ENCODE measurements at regions of chr3 and their contacts with region 1.

Region 1: DNA sequence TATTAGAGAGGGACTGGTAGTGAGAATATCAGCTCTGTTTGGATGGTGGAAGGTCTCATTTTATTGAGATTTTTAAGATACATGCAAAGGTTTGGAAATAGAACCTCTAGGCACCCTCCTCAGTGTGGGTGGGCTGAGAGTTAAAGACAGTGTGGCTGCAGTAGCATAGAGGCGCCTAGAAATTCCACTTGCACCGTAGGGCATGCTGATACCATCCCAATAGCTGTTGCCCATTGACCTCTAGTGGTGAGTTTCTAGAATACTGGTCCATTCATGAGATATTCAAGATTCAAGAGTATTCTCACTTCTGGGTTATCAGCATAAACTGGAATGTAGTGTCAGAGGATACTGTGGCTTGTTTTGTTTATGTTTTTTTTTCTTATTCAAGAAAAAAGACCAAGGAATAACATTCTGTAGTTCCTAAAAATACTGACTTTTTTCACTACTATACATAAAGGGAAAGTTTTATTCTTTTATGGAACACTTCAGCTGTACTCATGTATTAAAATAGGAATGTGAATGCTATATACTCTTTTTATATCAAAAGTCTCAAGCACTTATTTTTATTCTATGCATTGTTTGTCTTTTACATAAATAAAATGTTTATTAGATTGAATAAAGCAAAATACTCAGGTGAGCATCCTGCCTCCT is 87.2 kb downstream of the TGFBR2 start:
- DNase-seq: peak; percentile 44
- H3K4me3 Mint-ChIP-seq: no peak overlapping the region
- H3K27ac Mint-ChIP-seq: peak overlapping the region; percentile 35
- H3K4me1 Mint-ChIP-seq: peaks cover 43% of the 10 kb centered on the region
- H3K27me3 Mint-ChIP-seq: no peaks in the 10 kb centered on the region

Region 2: DNA sequence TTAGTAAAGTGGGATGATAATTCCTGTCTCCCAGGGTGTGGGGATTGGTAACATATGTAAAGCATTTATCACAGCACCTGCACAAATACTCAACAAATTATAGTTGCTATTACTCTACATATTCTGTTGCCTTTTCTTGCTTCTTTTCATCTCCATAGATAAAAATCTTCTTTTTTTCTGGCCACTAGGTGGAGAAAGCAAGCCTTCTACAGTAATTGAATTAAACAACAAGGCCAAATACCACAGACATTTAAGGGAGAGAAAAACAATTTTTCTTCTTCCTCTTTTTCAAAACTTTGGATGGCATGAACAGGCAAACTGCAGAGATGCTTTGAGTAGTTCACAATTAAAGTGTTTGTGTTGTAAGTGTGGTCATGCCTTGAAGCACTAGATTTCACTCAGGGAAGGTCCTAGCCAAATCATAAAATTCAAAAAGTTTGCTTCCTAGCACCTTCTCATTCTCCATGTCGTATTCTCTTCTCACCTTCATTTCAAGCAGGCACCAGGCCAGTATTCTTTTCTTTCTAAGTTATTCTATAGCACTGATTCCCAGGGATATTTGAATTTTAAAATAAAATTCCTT is 580.6 kb before region 1 on chr3:
- CTCF ChIA-PET with region 1: interaction called, 8 read pairs
- POLR2A ChIA-PET with region 1: no interaction called
- intact Hi-C with region 1: loop called (anchors 2 kb)
- DNase-seq: no peak
- H3K4me3 Mint-ChIP-seq: no peak overlapping the region
- H3K27ac Mint-ChIP-seq: no peak overlapping the region
- H3K4me1 Mint-ChIP-seq: peaks cover 3% of the 10 kb centered on the region
- H3K27me3 Mint-ChIP-seq: no peaks in the 10 kb centered on the region

Region 3: DNA sequence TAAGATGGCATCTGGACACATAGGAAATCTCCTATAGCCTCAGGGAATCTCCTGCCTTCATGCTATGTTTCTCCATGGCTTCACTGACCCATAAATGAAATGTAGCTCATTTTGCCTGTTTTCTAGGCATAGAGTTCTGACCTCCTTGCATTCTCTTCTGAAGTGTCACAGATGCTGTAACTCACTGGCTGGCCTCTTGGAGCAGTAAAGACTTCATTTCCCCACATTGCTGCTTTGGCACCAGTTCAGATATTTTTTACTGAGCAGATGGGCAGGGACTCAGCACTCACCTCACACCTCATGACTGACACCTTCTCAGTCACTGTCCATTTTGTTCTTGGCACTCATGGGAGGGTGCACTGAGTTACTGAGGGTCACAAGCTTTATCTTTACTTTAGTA is 373.9 kb before region 1 on chr3:
- CTCF ChIA-PET with region 1: interaction called, 27 read pairs
- POLR2A ChIA-PET with region 1: no interaction called
- intact Hi-C with region 1: loop called (anchors 5 kb)
- DNase-seq: peak; percentile 44
- H3K4me3 Mint-ChIP-seq: no peak overlapping the region
- H3K27ac Mint-ChIP-seq: no peak overlapping the region
- H3K4me1 Mint-ChIP-seq: peaks cover 4% of the 10 kb centered on the region
- H3K27me3 Mint-ChIP-seq: no peaks in the 10 kb centered on the region

Region 4: DNA sequence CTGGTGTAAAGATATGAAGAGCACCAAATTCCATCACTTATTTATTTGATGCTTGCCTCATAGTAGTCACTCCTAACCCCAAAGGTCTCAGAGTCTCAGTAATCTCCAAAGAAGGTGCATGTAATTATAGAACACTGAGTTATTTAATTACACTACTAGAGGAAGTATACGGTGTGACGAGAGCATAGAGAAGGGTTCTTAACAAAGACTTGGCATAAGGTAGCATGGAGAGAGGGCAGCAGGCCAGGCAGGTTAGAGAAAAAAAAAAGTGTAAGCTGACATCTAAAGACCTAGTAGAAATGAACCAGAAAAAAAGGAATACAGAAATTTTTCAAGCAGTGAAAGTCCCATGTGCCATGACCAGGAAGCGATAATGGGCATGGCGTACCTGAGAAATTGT is 300.5 kb before region 1 on chr3:
- CTCF ChIA-PET with region 1: no interaction called
- POLR2A ChIA-PET with region 1: no interaction called
- intact Hi-C with region 1: no loop called
- DNase-seq: no peak
- H3K4me3 Mint-ChIP-seq: no peak overlapping the region
- H3K27ac Mint-ChIP-seq: no peak overlapping the region
- H3K4me1 Mint-ChIP-seq: no peaks in the 10 kb centered on the region
- H3K27me3 Mint-ChIP-seq: no peaks in the 10 kb centered on the region

Region 5: DNA sequence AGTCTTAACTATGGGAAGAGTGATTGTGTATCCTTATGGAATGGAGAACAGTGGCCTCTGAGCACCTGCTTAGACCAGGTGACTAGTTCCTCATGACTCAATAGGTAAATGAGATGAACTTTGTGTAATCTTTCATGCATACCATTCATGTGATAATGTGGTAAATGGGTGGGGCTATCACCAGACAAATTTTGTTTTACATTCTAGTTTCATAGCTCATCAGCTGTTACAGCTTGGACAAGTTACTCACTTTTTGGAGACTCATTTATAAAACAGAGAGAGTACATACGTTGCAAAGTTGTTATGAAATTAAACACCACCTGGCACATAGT is 190.9 kb before region 1 on chr3:
- CTCF ChIA-PET with region 1: interaction called, 11 read pairs
- POLR2A ChIA-PET with region 1: no interaction called
- intact Hi-C with region 1: no loop called
- DNase-seq: no peak
- H3K4me3 Mint-ChIP-seq: no peak overlapping the region
- H3K27ac Mint-ChIP-seq: peak overlapping the region; percentile 70
- H3K4me1 Mint-ChIP-seq: peaks cover 46% of the 10 kb centered on the region
- H3K27me3 Mint-ChIP-seq: no peaks in the 10 kb centered on the region

Region 6: DNA sequence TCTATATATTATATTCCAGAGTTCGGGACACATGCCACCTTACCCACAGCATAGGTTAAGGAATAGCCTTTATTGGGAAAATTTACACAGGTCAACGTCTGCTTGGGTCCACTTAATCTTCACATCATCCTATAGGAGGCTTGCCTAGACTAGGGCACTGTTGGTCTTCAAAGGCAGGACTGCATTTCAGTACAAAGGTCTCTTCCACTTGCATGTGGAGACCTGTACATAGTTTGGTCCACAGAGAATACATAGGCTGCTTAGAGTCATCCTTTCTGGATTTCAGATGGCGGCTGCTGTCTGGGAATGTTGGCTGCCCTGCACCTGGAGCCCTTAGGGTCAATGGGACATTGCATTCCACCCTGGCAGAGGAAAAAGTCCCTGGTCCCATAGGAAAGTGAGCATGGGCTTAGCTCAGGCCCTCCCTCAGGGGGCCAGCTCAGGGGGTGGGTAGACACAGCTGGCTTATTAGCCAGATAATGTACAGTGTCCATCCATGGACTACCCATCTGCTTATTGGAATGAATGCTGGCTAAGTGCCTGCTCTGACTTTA is 162.5 kb before region 1 on chr3:
- CTCF ChIA-PET with region 1: no interaction called
- POLR2A ChIA-PET with region 1: no interaction called
- intact Hi-C with region 1: no loop called
- DNase-seq: no peak
- H3K4me3 Mint-ChIP-seq: no peak overlapping the region
- H3K27ac Mint-ChIP-seq: no peak overlapping the region
- H3K4me1 Mint-ChIP-seq: no peaks in the 10 kb centered on the region
- H3K27me3 Mint-ChIP-seq: peaks cover 1% of the 10 kb centered on the region

Region 7: GRCh38 chr3:30658328-30659052 is 35.1 kb before region 1 on chr3:
- CTCF ChIA-PET with region 1: interaction called, 10 read pairs
- POLR2A ChIA-PET with region 1: no interaction called
- intact Hi-C with region 1: loop called (anchors 5 kb)
- DNase-seq: peak; percentile 72
- H3K4me3 Mint-ChIP-seq: peak overlapping the region; percentile 68
- H3K27ac Mint-ChIP-seq: peak overlapping the region; percentile 85
- H3K4me1 Mint-ChIP-seq: peaks cover 98% of the 10 kb centered on the region
- H3K27me3 Mint-ChIP-seq: no peaks in the 10 kb centered on the region

Measured in activated CD4-positive, alpha-beta memory T cell treated with anti-CD3 and anti-CD28 coated beads for 36 hours (primary cell).